AG04449 (cell line): ENCODE measurements at regions of chr12 and their contacts with region 1.

Region 1: GRCh38 chr12:22443379-22444316 is 100.7 kb downstream of the C2CD5 start:
- DNase-seq: peak; percentile 17
- H3K4me3 ChIP-seq: no peak overlapping the region
- CTCF ChIP-seq: peak; percentile 85

Region 2: DNA sequence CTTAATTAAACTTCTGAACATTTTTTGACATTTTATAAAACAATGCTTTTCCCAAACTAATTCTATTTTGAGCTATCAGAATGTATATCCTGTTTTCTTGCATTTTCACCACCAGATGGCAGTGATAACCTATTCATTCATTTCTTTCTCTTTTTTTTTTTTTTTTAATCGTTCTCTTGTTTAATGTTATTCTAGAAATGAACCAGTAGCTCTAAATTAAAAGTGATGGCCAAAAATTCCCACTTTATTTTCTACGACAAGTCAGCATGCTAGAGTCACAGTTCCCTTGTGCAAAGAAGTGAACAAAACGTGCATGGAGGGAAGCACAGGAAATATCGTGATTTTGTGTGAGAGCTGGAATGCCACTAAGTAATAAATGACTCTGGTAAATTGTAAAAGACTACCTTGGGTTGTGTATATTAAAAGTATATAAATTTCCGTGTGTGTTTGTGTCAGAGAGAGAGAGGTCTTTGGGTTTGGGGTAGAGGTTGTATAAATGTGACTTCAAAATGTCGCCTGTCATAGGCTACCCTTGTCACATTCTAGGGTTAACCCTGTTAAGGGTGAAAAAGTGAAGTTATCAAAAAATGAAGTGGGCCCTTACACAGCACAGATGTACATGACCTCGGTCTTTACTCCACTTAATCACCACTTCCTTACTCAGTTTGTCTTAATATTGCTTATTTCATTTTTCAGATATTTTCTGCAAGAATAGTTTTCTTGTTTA is 745.6 kb before region 1 on chr12:
- CTCF ChIA-PET with region 1: interaction called, 16 read pairs
- POLR2A ChIA-PET with region 1: no interaction called
- DNase-seq: no peak
- H3K4me3 ChIP-seq: no peak overlapping the region
- CTCF ChIP-seq: peak; percentile 18

Region 3: GRCh38 chr12:22083167-22083566 is 360.5 kb before region 1 on chr12:
- CTCF ChIA-PET with region 1: interaction called, 29 read pairs
- POLR2A ChIA-PET with region 1: no interaction called
- DNase-seq: no peak
- H3K4me3 ChIP-seq: no peak overlapping the region
- CTCF ChIP-seq: no peak

Region 4: DNA sequence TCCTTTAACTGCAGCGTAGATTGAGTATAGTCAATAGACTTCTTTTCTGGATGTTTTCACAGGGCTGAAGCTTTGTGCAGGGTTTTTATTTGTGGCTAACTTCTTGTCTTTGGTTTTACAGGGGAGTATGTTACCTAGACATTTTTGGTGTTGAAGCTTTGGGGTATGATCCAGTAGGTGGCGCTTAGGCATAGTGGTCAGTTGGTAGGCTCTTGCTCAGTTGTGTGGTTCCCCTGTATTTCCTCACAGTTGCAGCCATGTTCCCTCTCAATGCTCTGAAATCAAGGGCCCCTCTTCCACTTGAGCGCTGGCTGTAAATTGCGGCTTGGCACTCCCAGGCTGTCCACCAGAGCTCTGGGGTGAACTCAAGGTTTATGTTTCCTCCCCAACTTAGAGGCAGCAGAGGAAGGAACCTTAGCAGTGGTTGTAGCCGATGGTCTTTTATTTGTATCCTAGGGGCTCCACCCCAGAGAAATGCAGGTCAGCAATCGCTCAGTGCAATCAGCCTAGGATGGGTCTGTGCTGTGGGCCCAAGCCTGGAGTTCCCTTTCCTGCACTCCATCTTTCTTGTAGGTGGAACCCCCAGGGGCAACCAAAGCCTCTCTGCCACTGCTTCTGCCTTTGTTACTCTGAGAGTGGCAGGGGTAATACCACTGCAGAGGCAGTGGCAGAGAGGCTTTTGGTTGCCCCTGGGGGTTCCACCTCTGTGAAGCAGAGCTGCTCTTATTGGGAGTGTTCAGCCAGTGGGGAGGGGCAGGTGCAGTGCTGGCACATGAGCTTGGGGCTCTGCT is 342.5 kb before region 1 on chr12:
- CTCF ChIA-PET with region 1: interaction called, 22 read pairs
- POLR2A ChIA-PET with region 1: no interaction called
- DNase-seq: peak; percentile 5
- H3K4me3 ChIP-seq: no peak overlapping the region
- CTCF ChIP-seq: peak; percentile 33

Region 5: DNA sequence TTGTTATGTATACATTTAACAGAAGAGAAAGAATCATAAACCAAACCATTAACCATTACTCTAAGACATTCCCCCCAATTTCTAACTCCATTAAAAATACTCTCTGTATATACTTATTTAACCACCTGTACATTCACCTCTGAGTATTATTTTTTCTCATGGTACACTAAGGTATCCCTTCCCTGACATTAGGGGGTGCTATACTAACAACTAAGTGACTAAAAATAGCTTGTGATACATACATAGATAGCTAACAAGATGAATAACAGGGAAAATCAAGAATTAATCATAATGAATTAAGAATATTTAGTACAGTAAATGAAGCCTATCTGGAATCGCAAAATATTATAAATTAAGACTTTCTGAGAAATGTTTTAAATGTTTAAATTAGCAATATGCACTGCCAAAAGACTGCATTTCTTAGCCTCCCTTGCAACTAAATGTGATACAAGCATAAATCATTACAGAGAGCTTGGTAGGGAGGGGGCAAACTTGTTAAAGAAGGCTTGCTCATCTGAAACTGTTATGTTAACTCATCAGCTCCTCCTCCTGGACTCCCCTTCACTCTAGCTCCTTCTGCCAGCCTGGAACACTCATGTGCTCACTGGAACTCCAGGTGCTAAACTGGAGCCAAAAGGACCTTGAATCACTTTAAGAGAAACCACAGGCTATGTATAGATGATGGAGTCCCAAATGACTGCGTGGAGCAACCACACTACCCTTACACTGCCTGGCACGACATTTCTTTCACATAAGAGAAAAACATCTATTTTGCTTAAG is 85.8 kb after region 1 on chr12:
- CTCF ChIA-PET with region 1: no interaction called
- POLR2A ChIA-PET with region 1: no interaction called
- DNase-seq: no peak
- H3K4me3 ChIP-seq: no peak overlapping the region
- CTCF ChIP-seq: peak; percentile 19

Region 6: DNA sequence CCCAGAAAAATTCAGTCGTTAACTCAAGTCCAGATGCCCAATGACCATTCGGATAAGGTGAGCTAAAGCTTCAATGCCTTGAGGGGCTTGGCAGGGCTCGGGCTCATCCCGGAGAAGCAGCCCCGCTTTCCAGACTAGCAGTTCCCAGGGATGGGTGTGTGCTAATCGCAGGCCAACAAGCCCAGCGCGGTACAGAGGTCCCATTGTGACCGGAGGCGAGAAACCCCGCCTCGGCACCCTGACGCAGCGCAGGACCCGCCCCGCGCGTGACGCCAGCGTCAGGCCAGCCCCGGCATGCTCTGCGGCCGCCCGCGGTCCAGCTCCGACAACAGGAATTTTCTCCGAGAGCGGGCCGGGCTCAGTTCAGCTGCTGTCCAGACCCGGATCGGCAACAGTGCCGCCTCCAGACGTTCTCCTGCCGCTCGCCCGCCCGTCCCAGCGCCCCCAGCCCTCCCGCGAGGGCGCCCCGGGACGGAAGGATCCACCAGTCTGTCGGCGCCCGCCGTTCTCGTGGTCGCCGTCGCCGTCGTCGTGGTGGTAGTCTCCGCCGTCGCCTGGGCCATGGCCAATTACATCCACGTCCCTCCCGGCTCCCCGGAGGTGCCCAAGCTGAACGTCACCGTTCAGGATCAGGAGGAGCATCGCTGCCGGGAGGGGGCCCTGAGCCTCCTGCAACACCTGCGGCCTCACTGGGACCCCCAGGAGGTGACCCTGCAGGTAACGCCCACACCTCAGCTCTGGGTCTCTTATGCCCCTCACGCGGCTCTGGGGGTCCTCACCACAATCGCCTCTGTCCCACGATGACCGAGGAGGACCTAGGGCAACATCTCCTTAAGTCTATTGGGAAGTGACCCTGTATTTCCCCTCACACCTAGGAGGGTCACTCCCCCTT is 181.5 kb after region 1 on chr12 and contains the start of gene ETNK1:
- CTCF ChIA-PET with region 1: no interaction called
- POLR2A ChIA-PET with region 1: no interaction called
- DNase-seq: peak; percentile 41
- H3K4me3 ChIP-seq: peak within 1 kb of the TSS; percentile 97
- CTCF ChIP-seq: no peak